GM13976 (cell line): ENCODE measurements at regions of chr5 and their contacts with region 1.

Region 1: GRCh38 chr5:103119765-103120606 is at the starts of genes GIN1 and PPIP5K2:
- DNase-seq: peak; percentile 78
- CTCF ChIP-seq: no peak

Region 2: DNA sequence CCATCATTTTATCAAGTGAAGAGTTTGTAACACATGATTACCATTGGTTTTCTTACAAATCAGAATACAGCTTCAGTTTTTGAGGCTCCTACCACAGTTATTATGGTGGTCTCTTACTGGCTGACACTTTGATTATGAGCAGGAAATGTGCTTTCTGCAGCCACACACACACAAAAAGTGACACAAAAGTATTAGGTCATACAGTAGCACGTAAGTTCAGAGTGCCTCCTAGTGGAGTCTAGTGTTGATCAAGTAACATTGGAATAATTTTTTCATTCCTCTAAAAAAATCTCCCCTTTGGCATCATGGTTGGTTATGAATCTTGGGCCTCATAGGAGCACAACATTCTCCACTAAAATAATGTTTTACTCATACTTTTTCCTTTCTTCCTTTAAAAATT is 327.3 kb before region 1 on chr5:
- in situ Hi-C with region 1: loop called (anchors 25 kb)
- DNase-seq: no peak
- CTCF ChIP-seq: no peak